Activated CD4-positive, alpha-beta memory T cell treated with anti-CD3 and anti-CD28 coated beads, Interleukin-2, amount 10 ng/mL, durations not matched to agents 7 days and 5 days (primary cell): ENCODE measurements at regions of chr5 and their contacts with region 1.

Region 1: GRCh38 chr5:94740286-94740685 is 121.8 kb downstream of the SLF1 start:
- DNase-seq: no peak
- H3K4me3 Mint-ChIP-seq: no peak overlapping the region
- H3K27ac Mint-ChIP-seq: no peak overlapping the region
- H3K4me1 Mint-ChIP-seq: no peaks in the 10 kb centered on the region
- H3K27me3 Mint-ChIP-seq: no peaks in the 10 kb centered on the region

Region 2: DNA sequence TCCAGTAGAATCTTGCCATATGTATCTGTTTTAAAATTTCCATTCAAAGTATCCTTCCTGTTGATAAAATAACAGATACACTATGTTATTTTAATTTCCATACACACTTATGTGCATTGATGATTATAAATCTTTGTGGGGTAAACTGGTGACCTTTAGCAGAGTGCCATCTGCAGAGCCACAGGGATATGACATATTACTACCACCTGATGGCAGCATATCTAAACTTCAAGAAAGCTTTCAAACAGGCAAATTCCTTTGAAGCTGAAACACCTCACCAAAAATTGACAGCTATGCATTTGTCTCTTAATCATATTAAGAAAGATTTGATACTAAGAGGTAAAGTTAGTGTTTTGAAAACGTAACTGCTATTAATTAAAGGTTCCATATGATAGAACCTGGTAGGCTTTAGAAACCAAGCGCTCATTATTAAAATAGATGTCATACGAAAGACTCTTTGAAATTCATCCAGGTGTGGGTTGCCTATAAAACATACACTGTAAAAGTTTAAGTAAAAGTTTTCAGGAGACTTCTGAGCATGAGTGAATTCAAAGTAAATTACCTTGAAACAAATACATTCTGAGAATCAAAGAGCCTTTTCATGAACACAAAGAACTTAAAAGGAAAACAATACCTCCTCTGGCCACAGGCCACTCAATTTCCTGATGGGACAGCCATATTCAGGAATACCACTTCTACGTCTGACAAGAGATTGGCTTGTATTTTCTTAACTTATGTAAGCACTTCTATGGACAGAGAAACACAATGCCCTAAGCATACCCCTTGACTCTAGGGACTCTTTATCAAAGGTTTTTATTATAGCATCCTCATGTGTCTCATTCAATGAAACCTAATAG is 215.2 kb before region 1 on chr5:
- CTCF ChIA-PET with region 1: interaction called, 61 read pairs
- POLR2A ChIA-PET with region 1: interaction called, 3 read pairs
- DNase-seq: peak; percentile 23
- H3K4me3 Mint-ChIP-seq: no peak overlapping the region
- H3K27ac Mint-ChIP-seq: no peak overlapping the region
- H3K4me1 Mint-ChIP-seq: peaks cover 3% of the 10 kb centered on the region
- H3K27me3 Mint-ChIP-seq: no peaks in the 10 kb centered on the region

Region 3: GRCh38 chr5:94613583-94613982 is 126.7 kb before region 1 on chr5:
- CTCF ChIA-PET with region 1: interaction called, 12 read pairs
- POLR2A ChIA-PET with region 1: no interaction called
- DNase-seq: no peak
- H3K4me3 Mint-ChIP-seq: no peak overlapping the region
- H3K27ac Mint-ChIP-seq: no peak overlapping the region
- H3K4me1 Mint-ChIP-seq: peaks cover 41% of the 10 kb centered on the region
- H3K27me3 Mint-ChIP-seq: no peaks in the 10 kb centered on the region

Region 4: GRCh38 chr5:94849821-94850736 is 109.8 kb after region 1 on chr5:
- CTCF ChIA-PET with region 1: interaction called, 13 read pairs
- POLR2A ChIA-PET with region 1: no interaction called
- DNase-seq: peak; percentile 31
- H3K4me3 Mint-ChIP-seq: no peak overlapping the region
- H3K27ac Mint-ChIP-seq: no peak overlapping the region
- H3K4me1 Mint-ChIP-seq: peaks cover 24% of the 10 kb centered on the region
- H3K27me3 Mint-ChIP-seq: peaks cover 2% of the 10 kb centered on the region